ENCODE measurements at regions of chr7 and their contacts with region 1.

Region 1: GRCh38 chr7:15805891-15806290 is 119.4 kb upstream of the MEOX2 start:
- DNase-seq: no peak
- ATAC-seq: no peak
- H3K4me3 ChIP-seq: no peak overlapping the region
- H3K27ac ChIP-seq: no peak overlapping the region
- H3K4me1 ChIP-seq: no peaks in the 10 kb centered on the region
- H3K27me3 ChIP-seq: no peaks in the 10 kb centered on the region
- CTCF ChIP-seq: no peak

Region 2: DNA sequence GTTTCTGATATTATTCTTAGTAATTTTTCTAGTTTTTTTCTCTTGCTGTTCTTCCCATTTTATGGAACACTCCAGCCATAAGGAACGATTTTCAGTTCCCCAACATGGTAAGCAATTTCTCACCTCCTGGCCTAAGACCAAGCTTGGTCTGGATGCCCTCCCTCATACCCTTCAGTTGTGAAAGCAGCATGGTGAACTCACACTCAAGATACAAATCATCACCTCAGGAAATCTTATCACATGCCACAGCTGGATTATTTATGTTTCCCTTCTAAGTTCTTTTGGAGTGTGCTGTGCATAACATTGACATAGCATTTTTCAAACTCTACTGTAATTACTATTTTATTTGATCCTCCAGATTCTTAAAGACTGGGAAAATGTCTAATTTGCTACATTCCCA is 460.7 kb before region 1 on chr7:
- intact Hi-C with region 1: no loop called
- DNase-seq: no peak
- ATAC-seq: no peak
- H3K4me3 ChIP-seq: no peak overlapping the region
- H3K27ac ChIP-seq: no peak overlapping the region
- H3K4me1 ChIP-seq: no peaks in the 10 kb centered on the region
- H3K27me3 ChIP-seq: no peaks in the 10 kb centered on the region
- CTCF ChIP-seq: no peak

Region 3: GRCh38 chr7:15764851-15765382 is 41.0 kb before region 1 on chr7:
- intact Hi-C with region 1: loop called in 1 of 2 experiments (anchors 1 kb)
- DNase-seq: peak in 1 of 2 donors; percentile 21
- ATAC-seq: peak in 1 of 4 donors; percentile 60
- H3K4me3 ChIP-seq: no peak overlapping the region
- H3K27ac ChIP-seq: peak overlapping the region; percentile 51
- H3K4me1 ChIP-seq: no peaks in the 10 kb centered on the region
- H3K27me3 ChIP-seq: no peaks in the 10 kb centered on the region
- CTCF ChIP-seq: no peak

Measured in psoas muscle (tissue), 8 donors.